T-cell (primary cell): ENCODE measurements at regions of chr5 and their contacts with region 1.

Region 1: GRCh38 chr5:172785429-172786088 is 14.6 kb upstream of the DUSP1 start:
- DNase-seq: no peak
- ATAC-seq: no peak
- H3K4me3 ChIP-seq: no peak overlapping the region
- H3K4me3 Mint-ChIP-seq: no peak overlapping the region
- H3K27ac ChIP-seq: no peak overlapping the region
- H3K27ac Mint-ChIP-seq: no peak overlapping the region
- H3K4me1 ChIP-seq: peaks cover 0 to 4% of the 10 kb centered on the region in 2 experiments
- H3K4me1 Mint-ChIP-seq: no peaks in the 10 kb centered on the region
- H3K27me3 ChIP-seq: no peaks in the 10 kb centered on the region
- H3K27me3 Mint-ChIP-seq: no peaks in the 10 kb centered on the region

Region 2: DNA sequence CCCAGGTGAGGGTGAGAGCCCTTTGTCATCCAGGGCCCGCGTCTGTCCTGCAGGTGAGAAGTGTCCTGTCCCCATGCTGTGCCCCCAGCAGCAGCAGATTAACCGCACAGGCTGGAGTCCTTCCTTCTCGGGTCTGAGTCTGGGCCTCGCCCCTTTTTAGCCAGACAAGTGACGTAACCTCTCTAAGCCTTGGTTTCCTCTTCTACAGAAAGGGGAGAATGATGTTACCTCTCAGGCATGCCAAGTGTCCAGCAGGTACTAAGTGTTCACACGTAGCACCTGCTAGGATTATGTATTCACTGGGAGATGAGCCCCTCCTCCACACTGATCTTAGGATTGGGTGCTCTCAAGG is 137.6 kb before region 1 on chr5:
- CTCF ChIA-PET with region 1: no interaction called
- POLR2A ChIA-PET with region 1: no interaction called
- DNase-seq: no peak
- ATAC-seq: no peak
- H3K4me3 ChIP-seq: no peak overlapping the region
- H3K4me3 Mint-ChIP-seq: no peak overlapping the region
- H3K27ac ChIP-seq: no peak overlapping the region
- H3K27ac Mint-ChIP-seq: no peak overlapping the region
- H3K4me1 ChIP-seq: no peaks in the 10 kb centered on the region
- H3K4me1 Mint-ChIP-seq: no peaks in the 10 kb centered on the region
- H3K27me3 ChIP-seq: peaks cover 0 to 9% of the 10 kb centered on the region in 2 experiments
- H3K27me3 Mint-ChIP-seq: peaks cover 8 to 11% of the 10 kb centered on the region in 2 donors

Region 3: DNA sequence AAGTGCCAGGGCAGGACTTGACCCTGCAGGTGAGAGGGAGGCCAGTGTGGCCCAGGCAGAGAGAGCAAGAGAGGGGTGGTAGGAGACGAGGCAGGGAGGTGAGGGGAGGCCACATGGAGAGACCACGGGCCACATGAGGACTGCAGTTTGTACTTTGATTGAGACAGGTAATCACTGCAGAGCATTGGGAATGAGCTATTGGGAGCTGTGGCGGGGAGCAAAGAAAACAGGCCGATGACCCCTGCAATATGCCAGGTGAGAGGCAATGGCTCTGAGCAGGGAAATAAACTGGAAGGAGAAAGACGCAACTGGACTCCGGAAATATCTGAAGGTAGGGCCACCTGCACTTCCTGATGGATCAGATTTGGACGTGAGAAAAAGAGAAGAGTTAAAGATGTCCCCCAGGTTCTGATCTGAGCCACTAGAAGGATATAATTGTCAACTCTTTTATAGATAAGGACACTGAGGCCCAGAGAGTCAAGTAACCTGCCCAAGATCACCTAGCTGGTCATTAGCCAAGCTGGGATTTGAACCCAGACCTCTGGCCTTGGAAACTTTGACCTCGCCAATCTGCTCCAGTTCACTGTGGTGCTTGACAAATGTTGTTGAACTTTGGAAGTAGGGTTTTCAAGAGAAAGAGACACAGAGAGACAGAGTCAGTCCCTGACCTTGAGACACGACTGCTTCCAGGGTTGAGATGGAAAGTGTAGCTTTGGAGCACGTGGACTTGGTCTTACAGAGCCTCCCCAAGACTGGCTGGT is 56.9 kb before region 1 on chr5:
- CTCF ChIA-PET with region 1: no interaction called
- POLR2A ChIA-PET with region 1: interaction called in 1 of 2 experiments, 10 read pairs
- DNase-seq: no peak
- ATAC-seq: no peak
- H3K4me3 ChIP-seq: no peak overlapping the region
- H3K4me3 Mint-ChIP-seq: no peak overlapping the region
- H3K27ac ChIP-seq: no peak overlapping the region
- H3K27ac Mint-ChIP-seq: no peak overlapping the region
- H3K4me1 ChIP-seq: no peaks in the 10 kb centered on the region
- H3K4me1 Mint-ChIP-seq: no peaks in the 10 kb centered on the region
- H3K27me3 ChIP-seq: no peaks in the 10 kb centered on the region
- H3K27me3 Mint-ChIP-seq: no peaks in the 10 kb centered on the region